OCI-LY7 (cell line): ENCODE measurements at regions of chr17 and their contacts with region 1.

Region 1: GRCh38 chr17:59038734-59039133 is 67.9 kb downstream of the TRIM37 start:
- DNase-seq: no peak
- H3K4me3 ChIP-seq: no peak overlapping the region
- H3K27ac ChIP-seq: no peak overlapping the region
- H3K4me1 ChIP-seq: no peaks in the 10 kb centered on the region
- CTCF ChIP-seq: no peak

Region 2: GRCh38 chr17:59027750-59028149 is 11.0 kb before region 1 on chr17:
- CTCF ChIA-PET with region 1: no interaction called
- POLR2A ChIA-PET with region 1: interaction called, 7 read pairs
- intact Hi-C with region 1: loop called (anchors 2 kb)
- DNase-seq: no peak
- H3K4me3 ChIP-seq: no peak overlapping the region
- H3K27ac ChIP-seq: no peak overlapping the region
- H3K4me1 ChIP-seq: no peaks in the 10 kb centered on the region
- CTCF ChIP-seq: no peak